Mucosa of descending colon (tissue), 3 donors: ENCODE measurements at regions of chr1 and their contacts with region 1.

Region 1: DNA sequence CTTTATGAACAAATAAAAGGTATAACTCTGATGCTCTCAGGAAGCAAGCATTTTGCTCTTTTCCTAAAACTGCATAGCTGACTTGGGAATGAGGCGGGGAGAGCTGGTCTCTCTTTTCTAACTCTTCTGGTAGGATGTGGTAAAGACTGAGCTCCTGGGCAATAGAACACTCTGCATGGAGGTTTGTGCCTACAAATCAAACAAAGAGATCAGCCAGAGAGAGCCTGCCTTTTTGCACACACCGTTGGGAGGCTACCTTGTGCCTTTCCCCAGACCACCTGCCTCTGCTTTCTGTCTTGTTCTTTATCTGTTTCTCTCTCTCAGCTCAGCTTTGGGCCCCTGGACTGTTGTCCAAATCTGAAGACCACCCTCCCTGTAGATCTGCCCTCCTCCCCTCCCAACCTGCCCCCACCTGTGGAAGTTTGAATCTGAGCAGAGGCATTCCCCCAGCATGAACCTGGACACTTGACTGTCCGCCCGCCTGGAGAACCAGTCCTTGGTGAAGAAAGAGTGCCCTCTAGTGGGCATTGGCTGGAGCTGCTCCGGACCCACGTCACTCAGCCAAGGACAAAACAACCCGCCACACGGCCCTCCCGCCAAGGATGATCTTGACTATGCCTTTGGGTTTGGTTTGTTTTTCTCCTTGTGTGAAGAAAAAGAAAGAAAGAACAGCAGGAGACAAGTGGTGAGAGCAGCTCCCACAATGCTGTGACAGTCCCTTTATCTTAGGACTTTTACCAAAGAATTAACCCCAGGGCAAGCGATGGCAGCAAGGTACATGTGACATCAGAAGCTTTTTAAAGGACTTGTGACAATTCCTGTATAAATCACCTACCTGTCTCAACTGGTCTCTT is 228.2 kb downstream of the PBX1 start:
- DNase-seq: peak; percentile 70 to 87 (median 85)
- ATAC-seq: peak; percentile 97
- H3K4me3 ChIP-seq: no peak overlapping the region
- H3K4me1 ChIP-seq: peaks cover 3% of the 10 kb centered on the region
- CTCF ChIP-seq: peak; percentile 78

Region 2: GRCh38 chr1:164433141-164433817 is 353.9 kb before region 1 on chr1:
- intact Hi-C with region 1: loop called in 1 of 2 experiments (anchors 10 kb)
- DNase-seq: no peak
- ATAC-seq: no peak
- H3K4me3 ChIP-seq: no peak overlapping the region
- H3K4me1 ChIP-seq: no peaks in the 10 kb centered on the region
- CTCF ChIP-seq: no peak

Region 3: GRCh38 chr1:164576291-164577271 is 210.6 kb before region 1 on chr1:
- intact Hi-C with region 1: loop called in 1 of 2 experiments (anchors 10 kb)
- DNase-seq: no peak
- ATAC-seq: no peak
- H3K4me3 ChIP-seq: no peak overlapping the region
- H3K4me1 ChIP-seq: no peaks in the 10 kb centered on the region
- CTCF ChIP-seq: no peak

Region 4: GRCh38 chr1:164625001-164625617 is 162.1 kb before region 1 on chr1:
- intact Hi-C with region 1: loop called in 1 of 2 experiments (anchors 10 kb)
- DNase-seq: no peak
- ATAC-seq: no peak
- H3K4me3 ChIP-seq: no peak overlapping the region
- H3K4me1 ChIP-seq: peaks cover 24% of the 10 kb centered on the region
- CTCF ChIP-seq: no peak

Region 5: DNA sequence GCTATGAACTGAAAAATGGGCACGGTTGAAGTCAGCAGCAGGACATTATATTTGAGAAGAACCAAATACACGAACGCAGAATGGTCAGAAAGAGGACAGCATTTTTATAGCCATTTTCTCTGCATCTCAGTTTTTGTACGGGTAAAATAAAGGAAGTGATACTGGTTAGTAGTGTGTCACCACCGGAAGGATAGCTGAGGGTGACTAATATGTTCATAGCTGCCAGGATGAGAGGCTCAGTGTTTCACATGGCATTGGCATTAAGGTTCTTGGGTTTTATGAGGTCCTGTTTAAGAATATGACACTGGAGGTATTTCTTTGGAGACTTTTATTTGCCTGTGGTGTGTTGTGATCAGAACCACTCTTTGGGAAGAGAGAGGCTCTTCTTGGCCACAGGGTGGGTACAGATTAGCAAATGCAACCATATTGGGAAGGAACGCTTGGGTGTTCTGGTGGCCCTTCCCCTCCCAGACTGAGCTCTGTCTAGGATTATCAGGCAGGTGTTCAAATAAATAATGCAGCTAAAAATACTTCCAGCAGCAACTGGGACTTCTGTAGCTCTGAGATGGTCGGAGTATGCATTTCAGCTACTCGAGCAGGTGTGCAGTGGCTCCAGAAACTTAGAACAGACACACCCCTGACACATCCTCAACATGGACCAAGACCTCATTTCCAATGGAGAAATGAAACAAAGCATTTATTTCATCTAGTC is 70.1 kb before region 1 on chr1:
- intact Hi-C with region 1: no loop called
- DNase-seq: no peak
- ATAC-seq: peak; percentile 41
- H3K4me3 ChIP-seq: no peak overlapping the region
- H3K4me1 ChIP-seq: peaks cover 12% of the 10 kb centered on the region
- CTCF ChIP-seq: no peak